Dendritic cell treated with granulocyte-macrophage colony-stimulating factor and Interleukin-4, amounts not matched to agents 40 ng/mL and 50 ng/mL, for 4 days (primary cell): ENCODE measurements at regions of chr16 and their contacts with region 1.

Region 1: GRCh38 chr16:11407047-11407982 is 62.1 kb downstream of the RMI2 start:
- H3K4me3 Mint-ChIP-seq: no peak overlapping the region
- H3K27ac Mint-ChIP-seq: peak overlapping the region; percentile 17
- H3K4me1 Mint-ChIP-seq: peaks cover 33% of the 10 kb centered on the region
- H3K27me3 Mint-ChIP-seq: peaks cover 16% of the 10 kb centered on the region

Region 2: DNA sequence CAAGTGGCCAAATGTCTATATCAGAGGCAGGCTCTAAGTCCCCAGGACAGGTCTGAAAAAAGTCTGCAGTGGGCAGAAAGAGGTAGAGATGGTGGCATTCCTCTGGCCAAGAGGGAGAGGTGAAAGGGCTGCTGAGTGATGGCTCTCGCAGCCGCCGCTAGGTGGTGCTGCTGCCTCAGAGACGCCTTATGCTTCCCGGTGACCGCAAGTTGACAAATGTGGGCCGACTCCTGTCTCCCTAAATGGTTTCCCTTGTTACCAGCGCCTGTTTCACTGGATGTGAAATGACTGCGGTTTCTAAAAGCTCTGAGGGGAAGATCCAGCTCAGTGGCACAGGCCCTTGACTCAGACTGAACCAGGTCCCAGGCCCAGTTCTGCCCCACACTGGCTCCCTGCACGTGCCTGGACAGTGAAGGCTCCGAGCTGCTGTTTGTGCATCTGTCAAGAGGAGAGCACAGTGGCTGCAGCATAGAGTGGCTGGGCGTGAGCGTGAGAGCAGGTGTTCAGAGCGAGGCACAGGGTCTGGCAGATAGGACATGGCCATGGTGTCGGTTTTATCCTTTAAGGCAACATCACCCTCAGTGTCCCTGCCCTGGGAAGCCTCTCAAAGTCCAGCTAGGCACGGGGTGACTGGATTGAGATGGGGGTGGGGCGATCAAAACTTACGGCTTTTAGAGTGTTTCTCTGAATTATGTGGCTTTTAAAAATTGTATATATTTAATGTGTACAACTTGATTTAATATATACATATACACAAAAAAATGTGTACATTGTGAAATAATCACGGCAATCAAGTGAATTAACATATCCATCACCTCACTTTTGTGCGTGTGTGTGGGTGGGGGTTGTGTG is 443.1 kb before region 1 on chr16:
- intact Hi-C with region 1: loop called (anchors 5 kb)
- H3K4me3 Mint-ChIP-seq: no peak overlapping the region
- H3K27ac Mint-ChIP-seq: peak overlapping the region; percentile 73
- H3K4me1 Mint-ChIP-seq: peaks cover 53% of the 10 kb centered on the region
- H3K27me3 Mint-ChIP-seq: no peaks in the 10 kb centered on the region

Region 3: DNA sequence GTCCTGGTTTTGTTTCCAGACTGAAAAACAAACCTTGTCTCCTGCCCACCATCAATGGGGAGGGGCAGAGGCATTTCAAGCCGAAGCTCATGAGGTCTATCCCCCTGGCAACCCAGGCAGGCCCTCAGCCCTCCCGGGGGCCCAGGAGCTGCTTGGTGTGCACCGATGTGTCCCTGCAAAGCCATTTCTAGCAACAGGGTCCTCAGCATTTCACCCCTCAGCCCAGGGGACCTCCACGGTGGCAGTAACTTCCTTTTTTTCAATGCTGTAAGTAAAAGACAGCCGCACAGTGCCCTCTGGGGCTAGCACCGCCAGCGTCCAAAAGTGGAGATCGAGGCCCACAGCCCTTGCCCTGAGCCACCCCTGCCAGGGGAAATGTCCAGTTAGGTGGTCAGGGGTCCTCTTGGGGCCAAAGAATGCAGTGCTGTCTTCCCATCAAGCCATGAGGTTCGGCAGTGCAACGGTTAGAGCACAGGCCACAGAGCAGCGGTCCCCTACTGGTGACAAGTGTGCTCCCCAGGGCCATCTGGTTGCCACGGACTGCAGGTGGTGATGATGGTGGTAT is 99.5 kb after region 1 on chr16:
- intact Hi-C with region 1: loop called (anchors 2 kb)
- H3K4me3 Mint-ChIP-seq: peak overlapping the region; percentile 51
- H3K27ac Mint-ChIP-seq: peak overlapping the region; percentile 66
- H3K4me1 Mint-ChIP-seq: peaks cover 17% of the 10 kb centered on the region
- H3K27me3 Mint-ChIP-seq: peaks cover 30% of the 10 kb centered on the region

Region 4: DNA sequence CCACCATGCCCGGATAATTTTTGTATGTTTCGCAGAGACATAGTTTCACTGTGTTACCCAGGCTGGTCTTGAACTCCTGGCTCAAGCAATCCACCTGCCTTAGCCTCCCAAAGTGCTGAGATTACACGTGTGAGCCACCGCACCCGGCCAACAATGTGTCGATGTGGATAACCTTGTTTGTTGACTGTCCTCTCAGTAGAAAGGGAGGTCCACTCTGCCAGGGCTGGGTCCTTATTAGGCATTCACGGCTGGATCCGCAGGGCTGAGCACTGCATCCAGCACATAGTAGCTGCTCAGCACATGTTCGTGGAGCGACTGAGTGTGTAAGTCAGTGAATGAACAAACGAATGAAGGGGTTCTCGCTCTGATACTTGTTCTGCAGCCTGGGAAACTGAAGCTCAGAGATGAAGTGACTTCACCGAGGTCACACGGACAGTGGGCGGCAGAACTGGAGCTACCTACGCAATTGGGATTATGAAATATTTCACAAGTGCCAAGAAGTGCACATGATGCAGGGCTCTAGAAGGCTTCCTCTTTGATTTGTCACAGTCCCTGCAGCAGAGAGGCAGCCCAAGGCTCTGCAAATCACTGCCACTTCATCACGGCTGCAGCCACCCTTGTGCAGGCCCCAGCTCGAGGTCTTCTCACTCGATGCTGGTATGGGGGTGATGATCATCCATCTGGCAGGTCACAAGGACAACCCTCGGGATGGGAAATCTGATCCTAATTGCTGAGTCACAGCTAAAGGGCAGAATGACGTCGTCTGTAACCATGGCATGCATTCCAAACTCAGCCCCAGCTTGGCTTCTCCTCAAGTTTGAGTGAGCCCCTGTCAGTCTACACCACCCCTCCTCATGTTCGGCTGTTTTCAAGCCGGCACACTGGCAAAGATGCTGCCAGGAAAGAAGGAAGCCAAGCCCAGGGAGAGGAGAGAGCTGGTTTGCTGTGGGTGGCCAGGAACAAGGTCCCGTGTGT is 232.9 kb after region 1 on chr16:
- intact Hi-C with region 1: loop called (anchors 5 kb)
- H3K4me3 Mint-ChIP-seq: peak overlapping the region; percentile 62
- H3K27ac Mint-ChIP-seq: peak overlapping the region; percentile 95
- H3K4me1 Mint-ChIP-seq: peaks cover 56% of the 10 kb centered on the region
- H3K27me3 Mint-ChIP-seq: peaks cover 26% of the 10 kb centered on the region

Region 5: GRCh38 chr16:11715246-11715947 is 308.1 kb after region 1 on chr16:
- intact Hi-C with region 1: loop called (anchors 5 kb)
- H3K4me3 Mint-ChIP-seq: no peak overlapping the region
- H3K27ac Mint-ChIP-seq: no peak overlapping the region
- H3K4me1 Mint-ChIP-seq: peaks cover 5% of the 10 kb centered on the region
- H3K27me3 Mint-ChIP-seq: no peaks in the 10 kb centered on the region